Dorsolateral prefrontal cortex (tissue), 120 donors: ENCODE measurements at regions of chr6 and their contacts with region 1.

Region 1: GRCh38 chr6:134035823-134036296 is 16.6 kb downstream of the SLC2A12 start:
- DNase-seq: peak in 9 of 10 donors; percentile 32 to 72 (median 53)
- H3K4me3 ChIP-seq: peak overlapping the region in 6 of 59 donors; percentile 11 to 42 (median 22)
- H3K27ac ChIP-seq: peak overlapping the region in 56 of 59 donors; percentile 26 to 92 (median 78)
- H3K27me3 ChIP-seq: no peaks in the 10 kb centered on the region
- CTCF ChIP-seq: no peak

Region 2: DNA sequence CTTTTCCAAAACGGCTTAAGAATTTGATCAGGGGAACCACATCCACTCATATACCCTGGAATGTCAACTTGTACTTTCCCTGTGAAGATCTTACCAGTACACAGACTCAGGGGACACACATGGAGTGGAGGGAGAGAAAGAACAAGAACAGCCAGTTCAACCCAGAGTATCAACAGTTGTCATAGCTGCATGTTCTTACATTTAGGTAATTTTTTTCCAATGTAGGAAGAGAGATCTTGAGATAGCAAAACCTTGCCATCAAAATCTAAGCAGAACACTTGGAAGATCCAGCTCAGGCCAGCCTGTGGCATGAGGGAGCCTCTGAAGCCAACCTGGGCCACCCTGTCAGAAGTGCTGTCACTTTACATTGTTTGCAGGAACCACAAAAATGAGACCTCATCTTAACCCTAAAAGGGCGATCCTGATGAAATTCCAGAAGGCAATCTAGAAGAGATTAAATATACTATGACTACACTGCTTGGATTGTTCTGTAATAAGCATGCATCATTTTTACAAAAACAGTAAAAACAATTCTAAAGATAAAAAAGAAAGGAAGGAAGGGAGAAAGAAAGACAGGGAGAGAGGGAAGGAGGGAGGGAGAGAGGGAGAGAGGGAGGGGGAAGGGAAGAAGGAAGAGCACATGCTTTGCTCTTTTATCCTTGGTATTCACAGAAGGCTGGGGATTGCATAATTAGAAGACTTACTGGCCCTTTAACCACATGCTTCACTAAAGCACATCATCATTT is 271.7 kb before region 1 on chr6:
- intact Hi-C with region 1: no loop called
- DNase-seq: no peak
- H3K4me3 ChIP-seq: no peak overlapping the region
- H3K27ac ChIP-seq: no peak overlapping the region
- H3K27me3 ChIP-seq: peaks cover 0 to 31% (median 0%) of the 10 kb centered on the region in 45 donors
- CTCF ChIP-seq: no peak

Region 3: DNA sequence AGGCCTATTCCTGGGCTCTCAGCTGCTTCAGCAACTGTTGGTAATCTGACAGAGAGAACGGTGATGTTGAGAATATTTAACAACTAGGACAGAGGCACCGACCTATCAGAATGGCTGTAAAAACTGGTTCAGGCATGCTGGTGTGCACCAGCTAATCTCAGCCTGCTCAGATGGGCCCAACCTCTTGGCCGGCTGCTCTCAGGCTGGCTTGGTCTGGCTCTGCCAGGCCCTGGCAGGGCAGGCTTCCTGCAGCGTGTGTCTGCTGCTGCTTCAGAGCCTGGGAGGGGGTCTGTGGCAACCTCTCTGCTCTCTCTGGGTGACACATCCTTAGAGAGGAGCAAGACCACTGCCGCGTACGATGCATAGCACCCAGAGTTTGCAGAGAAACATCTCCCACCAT is 11.8 kb after region 1 on chr6:
- intact Hi-C with region 1: loop called in 1 of 2 experiments (anchors 2 kb)
- DNase-seq: peak in 4 of 10 donors; percentile 17 to 82 (median 36)
- H3K4me3 ChIP-seq: no peak overlapping the region
- H3K27ac ChIP-seq: peak overlapping the region in 43 of 59 donors; percentile 3 to 89 (median 46)
- H3K27me3 ChIP-seq: no peaks in the 10 kb centered on the region
- CTCF ChIP-seq: no peak

Region 4: GRCh38 chr6:134097114-134097707 is 61.4 kb after region 1 on chr6:
- intact Hi-C with region 1: no loop called
- DNase-seq: peak in 8 of 10 donors; percentile 47 to 74 (median 64)
- H3K4me3 ChIP-seq: peak overlapping the region in 2 of 59 donors; percentile 0 to 17
- H3K27ac ChIP-seq: peak overlapping the region in 5 of 59 donors; percentile 3 to 28 (median 16)
- H3K27me3 ChIP-seq: no peaks in the 10 kb centered on the region
- CTCF ChIP-seq: peak; percentile 70 to 99 (median 88)